H1 (cell line): ENCODE measurements at regions of chr1 and their contacts with region 1.

Region 1: GRCh38 chr1:209827384-209828262 is at the start of gene UTP25:
- DNase-seq: peak; percentile 81 to 95
- H3K4me3 ChIP-seq: peak within 1 kb of the TSS; percentile 76 to 97 (median 95)
- H3K27ac ChIP-seq: no peak within 1 kb of the TSS
- H3K4me1 ChIP-seq: no peaks in the 10 kb centered on the region
- H3K27me3 ChIP-seq: no peaks in the 10 kb centered on the region
- CTCF ChIP-seq: peak; percentile 57 to 73 (median 58)
- EP300 ChIP-seq: no peak
- POLR2A ChIP-seq: peak in 1 of 2 experiments; percentile 65; a peak in 2 of 3 replicates
- RAD21 ChIP-seq: no peak
- total RNA-seq, gene UTP25: 7.6 and 7.7 TPM in 2 replicates

Region 2: GRCh38 chr1:209747580-209748262 is 79.9 kb before region 1 on chr1:
- CTCF ChIA-PET with region 1: interaction called, 12 read pairs
- POLR2A ChIA-PET with region 1: no interaction called
- DNase-seq: peak; percentile 99
- H3K4me3 ChIP-seq: peak overlapping the region in 1 of 4 experiments; percentile 51; a peak in 4 of 8 replicates
- H3K27ac ChIP-seq: no peak overlapping the region
- H3K4me1 ChIP-seq: peaks cover 0 to 11% (median 0%) of the 10 kb centered on the region in 4 experiments; a peak in 1 of 7 replicates
- H3K27me3 ChIP-seq: peaks cover 0 to 4% (median 0%) of the 10 kb centered on the region in 4 experiments; a peak in 1 of 7 replicates
- CTCF ChIP-seq: peak; percentile 70 to 97 (median 94)
- EP300 ChIP-seq: peak in 1 of 2 experiments; percentile 76; a peak in 1 of 3 replicates
- POLR2A ChIP-seq: no peak
- RAD21 ChIP-seq: peak; percentile 70 to 75

Region 3: GRCh38 chr1:209784265-209785169 is 43.1 kb before region 1 on chr1 and contains the start of gene C1orf74:
- CTCF ChIA-PET with region 1: interaction called, 13 read pairs
- POLR2A ChIA-PET with region 1: no interaction called
- DNase-seq: peak; percentile 95 to 100
- H3K4me3 ChIP-seq: peak within 1 kb of the TSS; percentile 69 to 94 (median 78)
- H3K27ac ChIP-seq: peak within 1 kb of the TSS; percentile 77
- H3K4me1 ChIP-seq: peaks cover 0 to 6% (median 2%) of the 10 kb centered on the region in 4 experiments; a peak in 2 of 7 replicates
- H3K27me3 ChIP-seq: no peaks in the 10 kb centered on the region
- CTCF ChIP-seq: no peak
- EP300 ChIP-seq: peak in 1 of 2 experiments; percentile 54; a peak in 1 of 3 replicates
- POLR2A ChIP-seq: peak; percentile 92 to 96
- RAD21 ChIP-seq: no peak; a peak in 1 of 4 replicates
- total RNA-seq, gene C1orf74: 3.9 and 4.1 TPM in 2 replicates

Region 4: GRCh38 chr1:209805875-209806760 is 21.5 kb before region 1 on chr1 and contains the start of gene IRF6:
- CTCF ChIA-PET with region 1: interaction called, 254 read pairs
- POLR2A ChIA-PET with region 1: interaction called, 4 read pairs
- DNase-seq: peak; percentile 93 to 98
- H3K4me3 ChIP-seq: peak within 1 kb of the TSS; percentile 73 to 91 (median 80)
- H3K27ac ChIP-seq: peak within 1 kb of the TSS; percentile 66; the same call in 1 of the 2 replicates
- H3K4me1 ChIP-seq: peaks cover 0 to 7% (median 0%) of the 10 kb centered on the region in 4 experiments; a peak in 4 of 7 replicates
- H3K27me3 ChIP-seq: no peaks in the 10 kb centered on the region
- CTCF ChIP-seq: no peak
- EP300 ChIP-seq: no peak
- POLR2A ChIP-seq: peak; percentile 81 to 85
- RAD21 ChIP-seq: no peak
- total RNA-seq, gene IRF6: 13.3 and 13.4 TPM in 2 replicates

Region 5: GRCh38 chr1:209844695-209845407 is 17.2 kb after region 1 on chr1:
- CTCF ChIA-PET with region 1: interaction called, 25 read pairs
- POLR2A ChIA-PET with region 1: no interaction called
- DNase-seq: no peak
- H3K4me3 ChIP-seq: no peak overlapping the region
- H3K27ac ChIP-seq: no peak overlapping the region
- H3K4me1 ChIP-seq: no peaks in the 10 kb centered on the region
- H3K27me3 ChIP-seq: no peaks in the 10 kb centered on the region
- CTCF ChIP-seq: no peak
- EP300 ChIP-seq: no peak
- POLR2A ChIP-seq: no peak
- RAD21 ChIP-seq: no peak

Region 6: GRCh38 chr1:209860293-209860881 is 32.8 kb after region 1 on chr1:
- CTCF ChIA-PET with region 1: interaction called, 15 read pairs
- POLR2A ChIA-PET with region 1: no interaction called
- DNase-seq: peak in 1 of 2 experiments; percentile 82
- H3K4me3 ChIP-seq: no peak overlapping the region
- H3K27ac ChIP-seq: no peak overlapping the region
- H3K4me1 ChIP-seq: peaks cover 12 to 22% (median 17%) of the 10 kb centered on the region in 4 experiments
- H3K27me3 ChIP-seq: no peaks in the 10 kb centered on the region
- CTCF ChIP-seq: peak; percentile 65 to 88 (median 78)
- EP300 ChIP-seq: no peak
- POLR2A ChIP-seq: no peak
- RAD21 ChIP-seq: peak; percentile 86 to 90

Region 7: DNA sequence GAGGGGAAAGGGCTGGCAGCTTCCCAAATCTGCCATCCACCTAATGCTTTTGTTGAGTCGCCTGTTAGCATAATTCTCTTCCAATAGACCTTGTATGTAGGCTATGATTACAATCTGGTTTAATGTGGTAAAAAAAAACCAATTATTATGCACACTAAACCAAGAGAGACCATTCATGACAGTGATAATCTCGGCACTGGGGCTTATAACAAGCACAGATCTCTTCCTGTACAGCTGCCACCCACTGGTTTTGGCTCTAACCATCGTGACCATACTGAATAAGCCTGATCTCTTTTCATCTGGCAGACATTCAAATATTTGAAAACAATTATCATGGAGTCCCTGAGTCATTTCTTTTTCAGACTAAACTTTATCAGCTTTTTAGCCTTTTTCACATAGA is 98.4 kb after region 1 on chr1:
- CTCF ChIA-PET with region 1: no interaction called
- POLR2A ChIA-PET with region 1: no interaction called
- DNase-seq: no peak
- H3K4me3 ChIP-seq: no peak overlapping the region
- H3K27ac ChIP-seq: no peak overlapping the region
- H3K4me1 ChIP-seq: no peaks in the 10 kb centered on the region
- H3K27me3 ChIP-seq: no peaks in the 10 kb centered on the region
- CTCF ChIP-seq: no peak
- EP300 ChIP-seq: no peak
- POLR2A ChIP-seq: no peak
- RAD21 ChIP-seq: no peak